ENCODE measurements at regions of chr17 and their contacts with region 1.

Region 1: GRCh38 chr17:64129764-64130558 is at the start of gene ERN1:
- DNase-seq: peak; percentile 94
- H3K4me3 Mint-ChIP-seq: peak within 1 kb of the TSS; percentile 90
- H3K27ac Mint-ChIP-seq: peak within 1 kb of the TSS; percentile 93
- H3K4me1 Mint-ChIP-seq: peaks cover 56% of the 10 kb centered on the region
- H3K27me3 Mint-ChIP-seq: no peaks in the 10 kb centered on the region
- total RNA-seq, gene ERN1: 45.3 to 47.7 TPM

Region 2: GRCh38 chr17:63904316-63904715 is 225.6 kb before region 1 on chr17:
- CTCF ChIA-PET with region 1: interaction called, 28 read pairs
- POLR2A ChIA-PET with region 1: no interaction called
- intact Hi-C with region 1: no loop called
- DNase-seq: no peak
- H3K4me3 Mint-ChIP-seq: no peak overlapping the region
- H3K27ac Mint-ChIP-seq: no peak overlapping the region
- H3K4me1 Mint-ChIP-seq: peaks cover 11% of the 10 kb centered on the region
- H3K27me3 Mint-ChIP-seq: no peaks in the 10 kb centered on the region

Region 3: GRCh38 chr17:63946440-63947367 is 183.3 kb before region 1 on chr17:
- CTCF ChIA-PET with region 1: interaction called, 26 read pairs
- POLR2A ChIA-PET with region 1: interaction called, 7 read pairs
- intact Hi-C with region 1: no loop called
- DNase-seq: peak; percentile 77
- H3K4me3 Mint-ChIP-seq: peak overlapping the region; percentile 53
- H3K27ac Mint-ChIP-seq: peak overlapping the region; percentile 75
- H3K4me1 Mint-ChIP-seq: peaks cover 14% of the 10 kb centered on the region
- H3K27me3 Mint-ChIP-seq: no peaks in the 10 kb centered on the region

Region 4: DNA sequence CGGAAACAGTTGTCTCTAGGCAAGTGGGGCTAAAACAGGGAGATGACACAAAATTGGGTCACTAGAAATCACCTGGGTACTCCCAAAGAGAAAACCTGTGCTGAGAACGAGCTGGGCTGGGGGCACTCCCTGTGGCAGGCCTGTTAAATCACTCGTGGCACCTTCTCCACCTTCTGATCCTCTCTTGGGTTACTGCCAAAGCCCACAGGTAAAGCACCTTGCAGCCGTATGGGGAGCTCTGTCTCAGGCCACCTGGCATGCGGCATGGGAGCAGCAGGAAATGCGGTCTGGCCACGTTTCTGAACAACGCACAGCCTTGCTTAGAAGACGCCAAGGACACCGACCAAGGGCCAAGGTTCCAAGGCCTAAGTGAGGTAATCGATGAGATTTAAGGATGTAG is 88.0 kb before region 1 on chr17:
- CTCF ChIA-PET with region 1: interaction called, 14 read pairs
- POLR2A ChIA-PET with region 1: interaction called, 3 read pairs
- intact Hi-C with region 1: no loop called
- DNase-seq: no peak
- H3K4me3 Mint-ChIP-seq: no peak overlapping the region
- H3K27ac Mint-ChIP-seq: peak overlapping the region; percentile 47
- H3K4me1 Mint-ChIP-seq: peaks cover 10% of the 10 kb centered on the region
- H3K27me3 Mint-ChIP-seq: no peaks in the 10 kb centered on the region

Region 5: DNA sequence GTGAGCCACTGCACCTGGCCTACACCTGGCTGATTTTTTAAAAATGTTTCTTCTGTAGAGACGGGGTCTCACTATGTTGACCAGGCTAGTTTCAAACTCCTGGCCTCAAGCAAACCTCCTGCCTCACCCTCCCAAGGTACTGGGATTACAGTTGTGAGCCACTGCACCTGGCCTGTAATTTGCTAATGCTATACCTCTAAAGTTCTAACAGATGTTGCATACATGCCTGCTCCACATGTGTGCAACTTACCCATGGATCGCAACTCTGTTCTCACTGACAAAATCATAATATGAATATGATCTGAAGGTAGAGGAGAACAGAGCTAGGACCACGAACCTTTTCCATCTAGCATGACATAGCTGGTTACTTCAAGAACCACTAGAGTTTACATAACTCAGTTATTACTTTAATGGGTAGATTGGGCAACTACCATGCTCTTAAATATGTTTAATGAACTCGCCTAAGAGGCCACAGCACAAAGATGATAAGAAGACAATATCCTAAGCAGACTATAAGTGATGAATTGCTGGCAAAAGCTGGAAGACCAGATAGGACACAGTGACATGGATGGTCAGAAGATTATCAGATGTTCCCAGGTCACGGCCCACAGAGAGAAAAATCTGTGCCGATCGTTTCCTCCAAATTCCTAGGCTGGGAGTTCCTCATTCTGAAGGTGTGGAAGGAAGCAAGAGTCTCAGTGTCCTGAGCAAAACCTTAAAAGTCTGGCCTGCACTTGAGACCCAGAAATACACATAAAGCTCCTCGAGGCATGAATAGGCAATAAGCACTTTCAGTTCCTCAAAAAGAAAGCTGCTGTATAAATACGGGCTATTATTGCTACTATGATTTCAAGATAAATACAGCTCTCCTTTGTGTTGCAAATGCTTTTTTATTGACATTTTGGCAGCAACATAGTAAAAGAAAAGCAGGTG is 55.9 kb before region 1 on chr17:
- CTCF ChIA-PET with region 1: interaction called, 193 read pairs
- POLR2A ChIA-PET with region 1: interaction called, 44 read pairs
- intact Hi-C with region 1: no loop called
- DNase-seq: no peak
- H3K4me3 Mint-ChIP-seq: no peak overlapping the region
- H3K27ac Mint-ChIP-seq: no peak overlapping the region
- H3K4me1 Mint-ChIP-seq: peaks cover 23% of the 10 kb centered on the region
- H3K27me3 Mint-ChIP-seq: no peaks in the 10 kb centered on the region

Region 6: GRCh38 chr17:64281962-64282727 is 152.2 kb after region 1 on chr17:
- CTCF ChIA-PET with region 1: interaction called, 16 read pairs
- POLR2A ChIA-PET with region 1: no interaction called
- intact Hi-C with region 1: no loop called
- DNase-seq: peak; percentile 63
- H3K4me3 Mint-ChIP-seq: no peak overlapping the region
- H3K27ac Mint-ChIP-seq: no peak overlapping the region
- H3K4me1 Mint-ChIP-seq: peaks cover 6% of the 10 kb centered on the region
- H3K27me3 Mint-ChIP-seq: no peaks in the 10 kb centered on the region

Region 7: DNA sequence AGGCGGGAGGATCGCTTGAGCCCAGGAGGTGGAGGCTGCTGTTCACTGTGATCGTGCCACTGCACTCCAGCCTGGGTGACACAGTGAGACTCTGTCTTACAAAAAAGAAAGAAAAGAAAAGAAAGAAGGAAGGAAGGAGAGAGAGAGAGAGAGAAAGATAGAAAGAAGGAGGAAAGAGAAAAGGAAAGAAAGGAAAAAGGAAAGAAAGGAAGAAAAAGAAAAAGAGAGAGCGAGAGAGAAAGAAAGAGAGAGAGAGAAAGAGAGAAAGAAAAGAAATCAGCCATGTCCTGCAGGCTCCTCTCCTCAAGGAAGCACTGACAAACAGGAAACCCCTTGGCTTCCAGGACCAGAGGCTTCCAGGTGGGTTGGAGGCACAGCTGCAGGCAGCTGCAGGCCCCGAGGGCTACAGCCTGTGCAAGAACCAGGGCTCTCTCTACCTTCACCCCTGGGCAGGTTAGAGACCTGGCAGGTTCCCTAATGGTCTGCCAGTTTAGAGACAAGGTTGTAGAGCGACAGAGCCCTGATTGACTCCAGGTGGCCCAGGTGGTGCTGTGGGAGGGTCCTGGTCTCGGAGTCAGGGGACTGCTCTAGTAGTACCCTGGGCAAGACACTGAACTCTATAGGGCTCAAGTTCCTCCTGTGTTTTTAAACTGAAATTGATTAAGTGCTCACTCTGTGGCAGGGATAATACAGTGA is 206.9 kb after region 1 on chr17:
- CTCF ChIA-PET with region 1: no interaction called
- POLR2A ChIA-PET with region 1: no interaction called
- intact Hi-C with region 1: no loop called
- DNase-seq: no peak
- H3K4me3 Mint-ChIP-seq: no peak overlapping the region
- H3K27ac Mint-ChIP-seq: no peak overlapping the region
- H3K4me1 Mint-ChIP-seq: no peaks in the 10 kb centered on the region
- H3K27me3 Mint-ChIP-seq: no peaks in the 10 kb centered on the region